ENCODE measurements at regions of chr7 and their contacts with region 1.

Region 1: DNA sequence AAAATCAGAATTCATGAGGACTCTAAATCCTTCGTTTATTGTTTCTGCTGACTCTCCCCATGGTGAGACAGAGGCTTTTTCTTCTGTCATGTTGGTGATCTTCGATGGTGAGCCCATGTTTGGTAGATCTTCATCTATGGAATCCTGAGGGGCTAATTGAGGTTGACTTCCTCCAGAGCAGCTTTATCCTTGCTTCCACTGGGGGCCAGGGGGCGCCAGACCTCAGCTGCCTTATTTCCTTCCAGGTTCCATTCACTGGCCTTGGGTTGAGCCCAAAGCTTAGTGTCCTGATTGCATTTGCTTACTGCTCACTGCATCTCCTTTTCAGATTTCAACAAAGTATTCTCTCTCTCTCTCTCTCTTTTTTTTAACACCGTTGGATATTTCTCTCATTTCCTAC is 80.7 kb downstream of the GCC1 start:
- DNase-seq: peak; percentile 23
- ATAC-seq: no peak
- H3K4me3 ChIP-seq: no peak overlapping the region
- H3K4me3 Mint-ChIP-seq: no peak overlapping the region
- H3K27ac ChIP-seq: no peak overlapping the region
- H3K27ac Mint-ChIP-seq: no peak overlapping the region
- H3K4me1 ChIP-seq: no peaks in the 10 kb centered on the region
- H3K4me1 Mint-ChIP-seq: no peaks in the 10 kb centered on the region
- H3K27me3 ChIP-seq: peaks cover 0 to 8% (median 2%) of the 10 kb centered on the region in 4 experiments
- H3K27me3 Mint-ChIP-seq: peaks cover 35% of the 10 kb centered on the region
- CTCF ChIP-seq: peak; percentile 39

Region 2: GRCh38 chr7:127447326-127447945 is 57.3 kb before region 1 on chr7:
- CTCF ChIA-PET with region 1: no interaction called
- POLR2A ChIA-PET with region 1: no interaction called
- intact Hi-C with region 1: no loop called
- DNase-seq: peak; percentile 84
- ATAC-seq: peak; percentile 100
- H3K4me3 ChIP-seq: no peak overlapping the region
- H3K4me3 Mint-ChIP-seq: no peak overlapping the region
- H3K27ac ChIP-seq: no peak overlapping the region
- H3K27ac Mint-ChIP-seq: peak overlapping the region; percentile 71
- H3K4me1 ChIP-seq: peaks cover 0 to 4% of the 10 kb centered on the region in 2 donors
- H3K4me1 Mint-ChIP-seq: peaks cover 3% of the 10 kb centered on the region
- H3K27me3 ChIP-seq: peaks cover 0 to 20% (median 7%) of the 10 kb centered on the region in 4 experiments
- H3K27me3 Mint-ChIP-seq: peaks cover 58% of the 10 kb centered on the region
- CTCF ChIP-seq: peak; percentile 94

Region 3: DNA sequence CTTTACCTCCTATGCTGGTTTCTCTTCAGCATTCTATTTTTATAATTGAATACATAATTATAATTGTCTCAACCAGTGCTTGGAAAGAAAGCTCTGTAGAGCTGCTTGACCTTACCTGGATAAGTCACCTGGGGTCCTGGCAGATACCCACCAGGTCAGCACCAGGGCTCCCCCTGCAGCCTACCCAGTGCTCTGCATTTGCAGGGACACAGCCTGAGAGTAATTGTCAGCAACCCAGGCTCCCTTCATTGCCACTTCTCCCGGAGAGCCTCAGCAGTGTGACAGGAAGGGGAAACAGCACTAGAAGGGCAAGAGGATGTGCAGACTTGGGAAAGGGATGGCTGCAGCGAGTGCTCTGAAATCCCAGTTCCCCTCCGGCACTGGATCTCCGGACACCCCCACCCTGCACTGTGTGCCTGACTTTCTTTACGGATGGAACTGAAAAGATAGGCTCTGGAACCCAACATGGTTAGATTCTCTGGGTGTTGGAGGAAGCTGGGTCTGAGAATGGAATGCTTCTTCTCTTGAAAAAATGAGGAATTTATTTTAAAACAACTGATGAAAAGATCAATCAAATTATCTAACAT is 124.6 kb after region 1 on chr7:
- CTCF ChIA-PET with region 1: interaction called, 11 read pairs
- POLR2A ChIA-PET with region 1: no interaction called
- intact Hi-C with region 1: loop called (anchors 2 kb)
- DNase-seq: peak; percentile 33
- ATAC-seq: peak; percentile 51
- H3K4me3 ChIP-seq: no peak overlapping the region
- H3K4me3 Mint-ChIP-seq: no peak overlapping the region
- H3K27ac ChIP-seq: no peak overlapping the region
- H3K27ac Mint-ChIP-seq: no peak overlapping the region
- H3K4me1 ChIP-seq: no peaks in the 10 kb centered on the region
- H3K4me1 Mint-ChIP-seq: no peaks in the 10 kb centered on the region
- H3K27me3 ChIP-seq: peaks cover 0 to 14% (median 6%) of the 10 kb centered on the region in 4 experiments
- H3K27me3 Mint-ChIP-seq: peaks cover 49% of the 10 kb centered on the region
- CTCF ChIP-seq: peak; percentile 53

Measured in B cell (primary cell).